Heart right ventricle (tissue), 16 donors: ENCODE measurements at regions of chr14 and their contacts with region 1.

Region 1: DNA sequence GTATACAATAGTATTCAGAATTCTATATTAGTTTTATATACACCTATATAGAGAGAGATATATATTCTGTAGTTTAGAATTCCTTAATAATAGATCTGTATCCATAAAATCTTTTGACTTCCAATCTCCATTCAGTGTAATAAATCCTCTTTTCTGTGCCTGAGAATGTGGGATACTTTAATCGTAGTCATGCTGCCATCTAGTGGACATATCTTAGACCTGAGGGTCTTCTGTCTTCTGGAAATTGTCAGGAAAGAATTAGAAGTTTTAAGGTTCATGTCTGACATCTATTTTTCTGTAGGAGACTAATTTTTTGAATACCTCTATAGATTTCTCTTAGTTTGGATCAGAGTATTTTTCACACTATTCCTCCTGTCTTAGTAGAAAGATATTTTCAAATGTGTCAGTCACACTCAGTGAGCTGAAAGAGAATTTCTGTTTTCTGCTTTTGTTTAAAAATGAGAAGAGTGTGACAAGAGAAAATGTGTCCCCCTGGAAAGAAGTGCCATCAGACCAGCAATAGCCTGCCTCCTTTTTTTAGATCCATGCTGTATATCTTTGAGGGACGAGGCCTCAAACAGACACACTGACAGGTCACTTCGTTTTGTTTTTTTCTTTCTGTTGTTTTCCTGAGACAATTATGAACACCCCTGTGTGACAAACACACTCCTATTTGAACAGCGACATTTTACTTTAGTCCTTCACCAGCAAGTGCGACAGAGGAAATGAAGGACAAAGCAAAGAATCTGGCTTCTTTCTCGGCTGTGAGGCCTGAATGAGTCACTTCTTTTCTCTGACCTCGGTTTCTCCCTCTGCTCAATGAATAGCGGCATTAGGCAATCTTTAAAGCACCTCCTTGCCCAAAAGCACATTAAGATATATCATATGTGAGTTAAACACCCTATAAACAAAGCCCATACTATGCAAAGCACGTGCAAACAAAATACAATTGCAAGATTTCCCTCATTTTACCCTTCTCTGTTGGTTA is 96.3 kb downstream of the GALC start:
- DNase-seq: peak in 1 of 2 donors; percentile 10
- ATAC-seq: peak in 3 of 8 donors; percentile 23 to 52 (median 47)
- H3K4me3 ChIP-seq: no peak overlapping the region
- H3K27ac ChIP-seq: no peak overlapping the region
- H3K4me1 ChIP-seq: no peaks in the 10 kb centered on the region
- H3K27me3 ChIP-seq: peaks cover 0 to 32% (median 14%) of the 10 kb centered on the region in 7 donors
- CTCF ChIP-seq: peak; percentile 54 to 85 (median 81)

Region 2: DNA sequence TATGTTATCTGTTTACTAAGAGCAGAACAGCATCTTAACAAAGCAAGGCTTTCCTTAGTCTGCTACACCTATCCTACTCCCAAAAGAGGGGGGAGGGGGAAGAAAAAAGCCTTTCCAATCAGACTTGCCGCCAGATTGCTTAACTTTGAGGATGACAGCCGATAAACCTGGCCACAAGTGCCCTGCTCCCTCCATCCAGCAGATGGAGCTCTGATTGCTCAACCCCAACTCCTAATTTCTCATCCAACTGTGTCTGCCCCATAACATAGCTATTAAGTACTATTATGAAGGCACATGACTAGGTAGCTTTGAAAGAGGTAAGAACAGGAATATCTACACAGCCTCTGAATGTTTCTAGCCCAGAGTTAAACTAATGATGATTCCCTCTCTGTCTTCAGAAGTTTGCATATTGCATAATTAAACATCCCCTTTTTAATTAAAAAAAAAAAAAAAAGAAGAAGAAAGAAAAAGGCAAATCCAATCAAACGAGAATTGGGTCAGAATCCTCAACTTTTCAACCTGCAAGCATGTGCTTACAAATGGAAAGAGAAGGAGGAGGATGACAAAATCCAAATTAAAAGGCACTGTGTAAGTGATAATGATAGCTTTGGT is 151.1 kb before region 1 on chr14:
- intact Hi-C with region 1: loop called in 7 of 10 experiments (anchors 2 to 10 kb)
- DNase-seq: no peak
- ATAC-seq: no peak
- H3K4me3 ChIP-seq: no peak overlapping the region
- H3K27ac ChIP-seq: no peak overlapping the region
- H3K4me1 ChIP-seq: no peaks in the 10 kb centered on the region
- H3K27me3 ChIP-seq: no peaks in the 10 kb centered on the region
- CTCF ChIP-seq: peak in 8 of 9 donors; percentile 8 to 68 (median 54)

Region 3: DNA sequence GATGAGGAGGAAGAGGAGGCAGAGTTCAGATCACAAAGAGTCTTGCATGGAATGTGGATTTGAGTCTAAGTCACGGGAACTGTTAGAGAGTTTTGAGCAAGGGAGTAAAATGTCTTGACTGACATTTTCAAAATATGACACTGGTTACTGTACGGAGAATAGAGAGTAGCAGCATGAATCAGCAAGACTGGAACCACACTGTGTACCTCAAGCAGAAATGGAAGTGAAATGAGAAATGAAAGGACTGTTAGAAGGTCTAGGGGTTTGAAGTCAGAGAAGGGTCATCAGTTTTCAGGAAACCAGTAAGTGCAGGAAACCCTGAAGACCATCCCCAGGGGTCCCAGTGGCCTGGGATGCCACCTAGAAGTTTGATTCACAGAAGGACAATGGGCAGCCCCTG is 140.0 kb before region 1 on chr14:
- intact Hi-C with region 1: no loop called
- DNase-seq: no peak
- ATAC-seq: no peak
- H3K4me3 ChIP-seq: no peak overlapping the region
- H3K27ac ChIP-seq: no peak overlapping the region
- H3K4me1 ChIP-seq: no peaks in the 10 kb centered on the region
- H3K27me3 ChIP-seq: no peaks in the 10 kb centered on the region
- CTCF ChIP-seq: no peak

Region 4: GRCh38 chr14:87805315-87805723 is 91.4 kb before region 1 on chr14:
- intact Hi-C with region 1: loop called (anchors 1 to 10 kb)
- DNase-seq: peak; percentile 25 to 29
- ATAC-seq: peak in 5 of 8 donors; percentile 34 to 71 (median 45)
- H3K4me3 ChIP-seq: no peak overlapping the region
- H3K27ac ChIP-seq: no peak overlapping the region
- H3K4me1 ChIP-seq: no peaks in the 10 kb centered on the region
- H3K27me3 ChIP-seq: no peaks in the 10 kb centered on the region
- CTCF ChIP-seq: peak in 8 of 9 donors; percentile 39 to 71 (median 64)